ENCODE measurements at regions of chr12 and their contacts with region 1.

Region 1: GRCh38 chr12:40224439-40225291 is at the start of gene LRRK2:
- DNase-seq: peak; percentile 35 to 72 (median 54)
- H3K4me3 ChIP-seq: peak within 1 kb of the TSS; percentile 40 to 87 (median 70)
- H3K27ac ChIP-seq: peak within 1 kb of the TSS; percentile 33 to 99 (median 95)
- H3K27me3 ChIP-seq: peaks cover 0 to 11% (median 0%) of the 10 kb centered on the region in 45 donors
- CTCF ChIP-seq: peak in 3 of 56 donors; percentile 2 to 7 (median 5)
- total RNA-seq, gene LRRK2: 19.4 to 44.8 (median 31.0) TPM

Region 2: DNA sequence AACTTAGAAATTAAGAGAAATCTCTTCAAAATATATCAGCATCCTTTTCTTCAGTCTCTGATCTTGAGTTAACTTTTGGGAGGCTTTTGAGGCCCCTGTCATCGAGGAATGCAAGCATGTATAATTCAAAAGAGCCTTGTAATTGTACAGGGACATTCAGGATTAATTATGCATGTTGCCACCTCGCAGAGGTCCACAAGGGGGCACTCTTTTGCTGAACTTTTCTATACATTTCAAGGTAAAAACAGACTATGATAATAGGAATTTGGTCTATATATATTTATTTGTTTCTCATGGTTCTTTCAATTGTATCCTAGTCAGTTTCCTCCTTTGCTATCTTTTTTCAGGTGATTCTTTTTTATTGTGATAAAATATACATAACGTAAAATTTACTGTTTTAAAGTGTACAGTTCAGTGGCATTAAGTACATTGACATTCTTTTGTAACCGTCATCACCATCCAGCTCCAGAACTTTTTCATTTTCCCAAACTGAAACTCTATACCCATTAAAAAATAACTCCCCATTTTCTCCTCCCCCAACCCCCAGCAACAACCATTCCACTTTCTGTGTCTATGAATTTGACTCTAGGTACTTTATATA is 71.8 kb before region 1 on chr12:
- intact Hi-C with region 1: loop called (anchors 10 kb)
- DNase-seq: peak in 8 of 10 donors; percentile 16 to 71 (median 46)
- H3K4me3 ChIP-seq: no peak overlapping the region
- H3K27ac ChIP-seq: no peak overlapping the region
- H3K27me3 ChIP-seq: no peaks in the 10 kb centered on the region
- CTCF ChIP-seq: peak; percentile 54 to 91 (median 75)

Region 3: GRCh38 chr12:40351976-40352375 is 127.3 kb after region 1 on chr12:
- intact Hi-C with region 1: no loop called
- DNase-seq: no peak
- H3K4me3 ChIP-seq: no peak overlapping the region
- H3K27ac ChIP-seq: no peak overlapping the region
- H3K27me3 ChIP-seq: no peaks in the 10 kb centered on the region
- CTCF ChIP-seq: no peak